BJ (cell line): ENCODE measurements at regions of chr7 and their contacts with region 1.

Region 1: GRCh38 chr7:131412031-131412430 is 84.4 kb downstream of the MKLN1 start:
- DNase-seq: no peak
- H3K4me3 ChIP-seq: no peak overlapping the region
- H3K27me3 ChIP-seq: no peaks in the 10 kb centered on the region
- CTCF ChIP-seq: no peak

Region 2: DNA sequence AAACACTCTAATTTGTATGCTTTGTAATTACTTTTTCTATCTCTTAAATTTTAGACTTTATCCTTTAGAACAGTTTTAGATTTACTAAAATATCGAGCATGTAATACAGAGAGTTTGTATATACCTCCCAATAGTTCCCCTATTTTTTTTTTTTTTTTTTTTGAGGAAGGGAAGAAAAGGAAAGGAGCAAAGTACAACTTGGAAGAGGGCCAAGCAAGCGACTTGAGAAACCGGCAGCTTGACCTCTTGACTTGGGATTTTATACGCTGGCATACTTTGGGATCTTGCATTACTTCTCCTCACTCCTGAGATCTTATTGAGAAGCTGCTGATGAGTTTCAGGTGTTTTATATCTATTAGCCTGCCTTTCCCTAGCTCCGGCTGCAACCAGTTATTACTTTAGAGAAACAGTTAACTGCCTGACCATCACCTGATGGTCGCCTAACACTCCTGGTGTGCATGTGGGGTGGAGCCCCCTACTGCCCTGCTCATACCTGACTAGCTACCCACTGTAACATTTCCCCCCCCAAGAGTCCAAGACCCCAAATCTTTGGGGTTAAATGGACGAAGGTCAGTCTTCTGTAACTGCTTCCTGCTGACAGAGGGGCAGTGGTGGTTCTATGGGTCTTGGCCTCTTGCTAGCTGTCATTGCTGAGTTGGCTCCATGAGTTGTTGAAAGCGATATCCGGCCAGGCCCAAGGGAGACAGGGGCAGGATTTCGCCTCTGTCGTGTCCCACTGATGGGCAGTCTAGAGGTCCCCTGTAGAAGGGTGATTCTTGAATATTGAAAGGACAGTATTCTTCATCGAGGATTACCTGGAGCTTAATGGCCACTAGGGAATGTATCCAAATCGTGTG is 55.9 kb before region 1 on chr7:
- CTCF ChIA-PET with region 1: no interaction called
- POLR2A ChIA-PET with region 1: interaction called, 29 read pairs
- DNase-seq: no peak
- H3K4me3 ChIP-seq: no peak overlapping the region
- H3K27me3 ChIP-seq: no peaks in the 10 kb centered on the region
- CTCF ChIP-seq: no peak